ENCODE measurements at regions of chr11 and their contacts with region 1.

Region 1: GRCh38 chr11:100719809-100720221 is 32.7 kb downstream of the ARHGAP42 start:
- DNase-seq: peak; percentile 50 to 62
- ATAC-seq: peak; percentile 89 to 93
- H3K4me3 ChIP-seq: peak overlapping the region in 2 of 4 donors; percentile 0 to 15
- H3K27ac ChIP-seq: peak overlapping the region; percentile 52 to 86 (median 69)
- H3K4me1 ChIP-seq: peaks cover 18 to 53% of the 10 kb centered on the region in 2 donors
- H3K27me3 ChIP-seq: no peaks in the 10 kb centered on the region
- CTCF ChIP-seq: no peak
- POLR2A ChIP-seq: no peak

Region 2: GRCh38 chr11:100734743-100735527 is 15.1 kb after region 1 on chr11:
- in situ Hi-C with region 1: no loop called
- intact Hi-C with region 1: loop called (anchors 1 kb)
- DNase-seq: no peak
- ATAC-seq: no peak
- H3K4me3 ChIP-seq: no peak overlapping the region
- H3K27ac ChIP-seq: no peak overlapping the region
- H3K4me1 ChIP-seq: peaks cover 15 to 18% of the 10 kb centered on the region in 2 donors
- H3K27me3 ChIP-seq: no peaks in the 10 kb centered on the region
- CTCF ChIP-seq: no peak
- POLR2A ChIP-seq: no peak

Region 3: DNA sequence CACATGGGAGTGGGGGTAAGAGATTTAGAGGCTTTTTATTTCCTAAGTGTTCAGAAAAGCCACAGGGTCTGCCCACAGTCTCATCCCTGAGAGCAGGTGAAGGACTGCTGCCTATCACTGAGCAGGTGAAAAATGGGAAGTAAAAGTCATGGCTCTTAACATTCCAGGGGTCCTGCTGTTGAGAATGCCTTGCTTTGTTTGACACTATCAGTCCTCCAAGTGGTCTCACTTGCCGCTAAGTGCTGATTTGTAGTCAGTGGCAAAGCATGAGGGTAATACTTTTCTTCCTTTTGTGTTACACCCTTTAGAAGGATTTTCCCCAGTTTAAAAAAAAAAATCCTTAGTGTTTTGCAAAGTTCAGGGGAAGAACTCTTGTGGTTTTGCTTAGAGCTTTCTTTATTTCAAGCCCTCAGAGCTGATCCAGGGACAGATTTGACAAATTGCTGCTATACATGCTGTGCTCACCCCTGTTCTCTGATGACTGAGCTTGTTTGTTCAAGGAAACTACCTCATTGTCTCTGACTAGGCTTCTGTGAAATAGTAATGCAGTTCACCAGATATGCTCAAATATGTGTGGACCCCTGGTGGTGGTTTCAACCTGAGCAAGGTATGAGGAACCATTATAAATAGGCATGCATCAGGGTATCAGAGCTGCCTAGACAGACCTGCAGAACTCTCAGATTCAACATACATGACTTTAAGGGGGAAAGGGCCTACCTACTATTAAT is 108.3 kb after region 1 on chr11:
- in situ Hi-C with region 1: no loop called
- intact Hi-C with region 1: no loop called
- DNase-seq: no peak
- ATAC-seq: no peak
- H3K4me3 ChIP-seq: no peak overlapping the region
- H3K27ac ChIP-seq: no peak overlapping the region
- H3K4me1 ChIP-seq: peaks cover 28 to 51% of the 10 kb centered on the region in 2 donors
- H3K27me3 ChIP-seq: no peaks in the 10 kb centered on the region
- CTCF ChIP-seq: peak in 1 of 5 experiments; percentile 17
- POLR2A ChIP-seq: no peak